ENCODE measurements at regions of chrX and their contacts with region 1.

Region 1: GRCh38 chrX:40006106-40007017 is 91.4 kb downstream of the BCOR start:
- DNase-seq: peak; percentile 42 to 80 (median 64)
- ATAC-seq: peak in 3 of 4 donors; percentile 71 to 77 (median 76)
- H3K4me3 ChIP-seq: peak overlapping the region in 8 of 12 donors; percentile 7 to 33 (median 26)
- H3K27ac ChIP-seq: peak overlapping the region in 4 of 12 donors; percentile 9 to 41 (median 22)
- H3K4me1 ChIP-seq: peaks cover 0 to 43% (median 6%) of the 10 kb centered on the region in 12 donors
- H3K27me3 ChIP-seq: peaks cover 0 to 78% (median 0%) of the 10 kb centered on the region in 9 donors
- CTCF ChIP-seq: no peak
- POLR2A ChIP-seq: no peak

Region 2: GRCh38 chrX:39820938-39821708 is 185.2 kb before region 1 on chrX:
- intact Hi-C with region 1: loop called in 4 of 10 experiments (anchors 10 kb)
- DNase-seq: peak in 4 of 5 donors; percentile 25 to 62 (median 40)
- ATAC-seq: peak in 1 of 4 donors; percentile 68
- H3K4me3 ChIP-seq: peak overlapping the region; percentile 17 to 57 (median 48)
- H3K27ac ChIP-seq: peak overlapping the region in 2 of 12 donors; percentile 33 to 45
- H3K4me1 ChIP-seq: peaks cover 0 to 21% (median 5%) of the 10 kb centered on the region in 12 donors
- H3K27me3 ChIP-seq: peaks cover 0 to 60% (median 0%) of the 10 kb centered on the region in 9 donors
- CTCF ChIP-seq: no peak
- POLR2A ChIP-seq: no peak

Region 3: DNA sequence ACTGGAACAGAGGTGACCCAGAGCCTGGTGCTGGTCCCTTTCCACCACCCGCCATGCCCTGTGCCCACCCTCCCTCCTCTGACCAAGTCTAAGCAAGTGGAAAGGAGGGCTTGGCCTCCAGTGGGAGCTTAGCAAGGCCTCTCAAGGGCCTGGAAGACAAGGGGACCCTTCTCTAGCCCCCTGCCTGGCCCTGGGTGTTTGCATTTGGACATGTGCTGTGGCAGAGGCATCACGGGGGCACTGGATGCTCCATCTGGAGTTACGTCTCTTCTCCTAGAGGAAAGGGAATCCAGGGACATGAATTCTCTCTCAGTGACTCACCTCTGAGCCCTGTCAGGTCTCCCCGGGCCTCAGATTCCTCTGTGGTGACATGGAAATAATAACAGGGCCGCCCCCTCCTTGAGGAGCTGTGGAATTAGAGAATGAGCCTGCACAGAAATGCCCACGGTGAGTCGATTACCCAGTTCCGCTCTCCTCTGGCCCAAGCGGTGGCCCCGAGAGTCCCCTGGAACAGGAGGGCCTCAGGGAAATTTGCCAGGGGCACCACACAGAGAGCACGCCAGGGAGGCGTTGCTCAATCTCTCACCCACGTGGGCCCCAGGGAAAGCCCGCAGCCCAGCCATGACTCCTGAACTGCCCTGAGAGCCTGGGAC is 98.3 kb before region 1 on chrX:
- intact Hi-C with region 1: loop called in 4 of 10 experiments (anchors 5 to 10 kb)
- DNase-seq: peak; percentile 44 to 76 (median 72)
- ATAC-seq: peak; percentile 80 to 93 (median 88)
- H3K4me3 ChIP-seq: no peak overlapping the region
- H3K27ac ChIP-seq: peak overlapping the region in 9 of 12 donors; percentile 27 to 66 (median 38)
- H3K4me1 ChIP-seq: peaks cover 0 to 29% (median 5%) of the 10 kb centered on the region in 12 donors
- H3K27me3 ChIP-seq: peaks cover 0 to 23% (median 0%) of the 10 kb centered on the region in 9 donors
- CTCF ChIP-seq: no peak
- POLR2A ChIP-seq: no peak

Region 4: DNA sequence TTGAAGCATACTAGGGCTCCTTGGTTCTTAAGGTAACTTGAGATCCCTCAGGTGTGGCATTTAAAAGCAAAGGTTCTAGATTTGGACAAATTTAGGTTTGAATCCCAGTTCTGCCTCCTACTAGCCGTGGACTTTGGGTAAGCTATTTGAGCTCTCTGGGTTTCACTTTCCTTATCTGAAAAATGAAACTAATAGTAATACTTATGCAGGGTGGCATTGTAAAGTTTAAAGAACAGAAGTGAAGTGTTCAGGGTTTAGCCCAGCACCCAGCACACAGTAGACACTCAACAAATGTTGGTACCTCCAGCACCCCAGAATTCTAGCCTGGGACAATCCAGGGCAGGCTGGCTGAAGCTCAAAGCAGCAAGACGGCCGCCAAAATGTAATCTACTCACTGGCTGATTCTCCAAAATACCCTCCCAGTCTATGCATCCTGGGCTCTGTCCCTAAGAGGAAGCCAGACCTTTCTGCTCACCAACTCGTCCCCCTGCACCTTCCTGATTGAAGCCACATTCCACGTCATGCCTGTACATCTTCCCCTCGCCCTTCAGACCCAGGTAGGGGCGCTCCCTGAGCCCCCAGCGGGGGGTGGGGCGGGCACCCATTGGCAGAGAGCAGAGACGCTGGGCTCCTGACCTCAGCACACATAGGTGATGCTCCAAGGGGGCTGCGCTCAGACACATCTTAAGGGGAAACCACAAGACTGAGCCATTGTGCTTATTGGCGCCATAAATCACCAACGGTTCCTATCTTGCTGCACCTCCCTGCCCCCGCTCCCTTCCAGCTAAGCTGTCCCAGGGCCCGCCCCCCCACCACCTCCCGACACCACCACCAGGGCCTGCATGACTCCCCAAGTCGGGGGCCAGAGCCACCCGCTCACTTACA is 69.2 kb before region 1 on chrX:
- intact Hi-C with region 1: loop called in 1 of 10 experiments (anchors 10 kb)
- DNase-seq: no peak
- ATAC-seq: no peak
- H3K4me3 ChIP-seq: peak overlapping the region in 1 of 12 donors; percentile 23
- H3K27ac ChIP-seq: peak overlapping the region in 1 of 12 donors; percentile 56
- H3K4me1 ChIP-seq: peaks cover 0 to 6% (median 0%) of the 10 kb centered on the region in 12 donors
- H3K27me3 ChIP-seq: no peaks in the 10 kb centered on the region
- CTCF ChIP-seq: no peak
- POLR2A ChIP-seq: no peak

Measured in heart left ventricle (tissue), 16 donors.